ENCODE measurements at regions of chr1 and their contacts with region 1.

Region 1: GRCh38 chr1:45569962-45570581 is 13.8 kb upstream of the NASP start:
- DNase-seq: peak; percentile 82
- H3K4me3 Mint-ChIP-seq: no peak overlapping the region
- H3K27ac Mint-ChIP-seq: peak overlapping the region; percentile 51
- H3K4me1 Mint-ChIP-seq: no peaks in the 10 kb centered on the region
- H3K27me3 Mint-ChIP-seq: no peaks in the 10 kb centered on the region

Region 2: DNA sequence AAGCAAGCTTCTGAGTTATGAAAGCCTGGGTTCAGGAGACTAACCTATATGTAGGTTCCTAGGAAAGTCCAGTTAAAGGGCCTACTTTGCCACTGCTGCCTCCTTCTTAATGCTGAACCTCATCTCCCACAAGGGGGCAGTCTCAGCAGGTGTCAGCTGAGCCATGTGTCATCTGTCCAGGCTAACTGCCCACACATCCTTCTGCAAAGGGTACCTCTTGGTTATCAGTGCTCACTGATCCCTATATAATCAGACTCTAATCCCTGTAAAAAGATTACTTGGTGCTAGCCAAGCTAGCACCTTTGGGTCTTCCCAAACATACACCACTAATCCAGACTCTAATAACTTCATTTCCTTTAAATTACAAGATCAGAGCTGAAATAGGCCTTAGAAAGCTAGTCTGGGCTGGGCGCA is 57.4 kb before region 1 on chr1:
- CTCF ChIA-PET with region 1: interaction called, 12 read pairs
- POLR2A ChIA-PET with region 1: no interaction called
- DNase-seq: peak; percentile 74
- H3K4me3 Mint-ChIP-seq: no peak overlapping the region
- H3K27ac Mint-ChIP-seq: no peak overlapping the region
- H3K4me1 Mint-ChIP-seq: peaks cover 15% of the 10 kb centered on the region
- H3K27me3 Mint-ChIP-seq: no peaks in the 10 kb centered on the region

Region 3: DNA sequence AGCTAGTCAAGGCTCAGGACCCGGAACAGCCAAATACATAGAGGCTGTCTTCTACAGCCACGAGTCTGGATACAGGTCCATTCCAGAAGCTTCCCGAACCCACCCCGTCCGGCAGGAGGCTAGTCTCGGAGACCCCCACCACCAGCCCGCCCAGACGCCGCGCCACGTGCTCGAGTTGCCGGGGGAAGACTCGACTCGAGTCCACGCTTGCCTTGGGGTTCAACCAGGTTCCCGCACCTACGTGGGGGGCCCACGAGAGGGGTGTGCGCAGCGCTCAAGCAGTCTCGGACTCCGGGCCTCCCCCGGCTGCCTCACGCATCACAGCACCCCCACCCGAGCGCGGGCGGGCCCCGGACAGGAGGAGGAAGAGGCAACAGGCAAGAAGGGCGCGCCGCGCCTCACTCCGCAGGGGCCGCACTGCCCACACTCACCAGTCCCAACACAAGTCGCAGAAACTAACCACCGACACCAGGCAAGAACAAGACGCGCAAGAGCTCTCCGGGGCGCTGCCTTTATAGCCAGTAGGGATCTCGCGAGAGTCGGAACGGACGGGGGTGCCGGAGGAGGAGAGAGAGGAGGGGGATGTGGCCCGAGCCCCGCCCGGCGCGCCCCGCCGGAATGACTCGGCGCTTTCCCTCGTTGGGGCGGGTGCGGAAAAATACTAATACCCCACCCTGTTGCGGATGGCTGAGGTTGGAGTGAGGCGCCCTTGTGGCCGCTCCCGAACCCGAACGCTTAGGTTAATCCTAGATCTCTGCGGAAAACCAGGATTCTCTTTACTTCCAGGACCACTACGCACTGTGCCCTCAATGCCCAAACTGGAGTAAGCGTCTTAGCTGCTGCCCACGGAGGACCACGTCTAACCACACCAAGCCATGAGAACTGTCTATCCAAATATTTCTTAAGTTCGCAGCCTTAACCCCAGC is 48.4 kb before region 1 on chr1 and contains the start of gene PRDX1:
- CTCF ChIA-PET with region 1: interaction called, 10 read pairs
- POLR2A ChIA-PET with region 1: interaction called, 12 read pairs
- DNase-seq: peak; percentile 96
- H3K4me3 Mint-ChIP-seq: peak within 1 kb of the TSS; percentile 97
- H3K27ac Mint-ChIP-seq: peak within 1 kb of the TSS; percentile 90
- H3K4me1 Mint-ChIP-seq: peaks cover 50% of the 10 kb centered on the region
- H3K27me3 Mint-ChIP-seq: peaks cover 4% of the 10 kb centered on the region
- total RNA-seq, gene PRDX1: 269 to 331 TPM

Region 4: DNA sequence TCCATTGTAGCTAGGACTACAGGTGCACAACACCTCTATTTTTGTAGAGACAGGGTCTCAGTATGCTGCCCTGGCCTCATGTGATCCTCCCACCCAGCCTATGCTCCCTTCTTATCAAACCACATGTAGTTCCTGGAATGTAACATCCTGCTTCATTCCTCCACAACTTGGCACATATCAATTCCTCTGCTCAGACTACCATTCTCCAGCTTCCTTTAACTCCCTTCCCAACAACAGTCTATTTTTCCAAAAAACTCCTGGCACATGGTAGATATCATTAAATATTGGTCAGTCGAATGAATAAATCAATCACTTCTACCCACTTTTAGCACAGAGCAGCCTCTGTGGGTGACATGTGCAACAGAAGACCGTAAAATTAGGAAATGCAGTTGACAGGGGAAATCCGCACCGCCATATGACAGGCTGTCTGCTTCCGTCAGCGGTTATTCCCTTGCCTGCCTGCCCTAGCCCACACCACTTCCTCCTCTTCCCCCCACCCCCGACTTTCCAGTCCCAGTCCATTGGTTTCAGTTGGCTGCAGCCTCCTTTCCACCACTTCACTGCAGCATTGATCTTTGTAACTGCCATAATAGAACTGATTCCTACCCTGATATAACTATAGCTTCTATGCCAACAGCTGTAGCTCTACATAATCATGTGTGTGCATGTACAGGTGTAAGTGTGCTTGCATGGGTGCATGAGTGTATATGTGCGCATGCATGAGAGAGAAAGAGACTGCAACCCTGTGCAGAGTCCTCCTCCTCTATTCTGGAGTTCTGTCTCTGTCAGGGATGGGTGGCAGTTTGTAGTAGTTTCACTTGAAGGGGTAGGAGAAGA is 26.3 kb before region 1 on chr1:
- CTCF ChIA-PET with region 1: interaction called, 14 read pairs
- POLR2A ChIA-PET with region 1: no interaction called
- DNase-seq: peak; percentile 73
- H3K4me3 Mint-ChIP-seq: peak overlapping the region; percentile 24
- H3K27ac Mint-ChIP-seq: peak overlapping the region; percentile 7
- H3K4me1 Mint-ChIP-seq: peaks cover 31% of the 10 kb centered on the region
- H3K27me3 Mint-ChIP-seq: no peaks in the 10 kb centered on the region

Region 5: GRCh38 chr1:45583264-45583665 is 13.2 kb after region 1 on chr1:
- CTCF ChIA-PET with region 1: interaction called, 10 read pairs
- POLR2A ChIA-PET with region 1: no interaction called
- DNase-seq: peak; percentile 97
- H3K4me3 Mint-ChIP-seq: peak overlapping the region; percentile 93
- H3K27ac Mint-ChIP-seq: peak overlapping the region; percentile 99
- H3K4me1 Mint-ChIP-seq: peaks cover 30% of the 10 kb centered on the region
- H3K27me3 Mint-ChIP-seq: no peaks in the 10 kb centered on the region

Measured in activated CD4-positive, alpha-beta T cell treated with anti-CD3 and anti-CD28 coated beads, Interleukin-2, amount 10 ng/mL, durations not matched to agents 7 days and 5 days (primary cell).